Ovary (tissue), 10 donors: ENCODE measurements at regions of chr19 and their contacts with region 1.

Region 1: GRCh38 chr19:39187559-39187957 is 9.2 kb upstream of the NCCRP1 start:
- DNase-seq: no peak
- H3K4me3 ChIP-seq: no peak overlapping the region
- H3K27ac ChIP-seq: no peak overlapping the region
- H3K4me1 ChIP-seq: no peaks in the 10 kb centered on the region
- H3K27me3 ChIP-seq: no peaks in the 10 kb centered on the region
- CTCF ChIP-seq: no peak
- EP300 ChIP-seq: no peak
- POLR2A ChIP-seq: no peak

Region 2: GRCh38 chr19:39110263-39110967 is 77.1 kb before region 1 on chr19:
- intact Hi-C with region 1: loop called in 1 of 4 experiments (anchors 5 kb)
- DNase-seq: peak in 4 of 5 donors; percentile 32 to 61 (median 54)
- H3K4me3 ChIP-seq: no peak overlapping the region
- H3K27ac ChIP-seq: no peak overlapping the region
- H3K4me1 ChIP-seq: no peaks in the 10 kb centered on the region
- H3K27me3 ChIP-seq: no peaks in the 10 kb centered on the region
- CTCF ChIP-seq: peak; percentile 24 to 52 (median 40)
- EP300 ChIP-seq: no peak
- POLR2A ChIP-seq: no peak

Region 3: GRCh38 chr19:39125554-39126311 is 61.8 kb before region 1 on chr19 and contains the start of gene PAK4:
- intact Hi-C with region 1: loop called in 2 of 4 experiments (anchors 5 kb)
- DNase-seq: peak; percentile 98 to 99 (median 98)
- H3K4me3 ChIP-seq: peak within 1 kb of the TSS; percentile 86
- H3K27ac ChIP-seq: peak within 1 kb of the TSS; percentile 62 to 78
- H3K4me1 ChIP-seq: peaks cover 10% of the 10 kb centered on the region
- H3K27me3 ChIP-seq: no peaks in the 10 kb centered on the region
- CTCF ChIP-seq: peak in 1 of 3 donors; percentile 9
- EP300 ChIP-seq: no peak
- POLR2A ChIP-seq: peak; percentile 54
- total RNA-seq, gene PAK4: 10.4 to 62.2 (median 35.4) TPM